Caco-2 (cell line): ENCODE measurements at regions of chr17 and their contacts with region 1.

Region 1: GRCh38 chr17:77444984-77445759 is 304.4 kb downstream of the SEC14L1 start:
- DNase-seq: no peak
- H3K4me3 ChIP-seq: no peak overlapping the region
- H3K4me3 Mint-ChIP-seq: no peak overlapping the region
- H3K27ac Mint-ChIP-seq: peak overlapping the region; percentile 16
- H3K4me1 ChIP-seq: peaks cover 21% of the 10 kb centered on the region
- H3K4me1 Mint-ChIP-seq: peaks cover 25% of the 10 kb centered on the region
- H3K27me3 ChIP-seq: no peaks in the 10 kb centered on the region
- H3K27me3 Mint-ChIP-seq: no peaks in the 10 kb centered on the region
- CTCF ChIP-seq: no peak

Region 2: GRCh38 chr17:77479372-77480198 is 34.4 kb after region 1 on chr17:
- CTCF ChIA-PET with region 1: no interaction called
- POLR2A ChIA-PET with region 1: no interaction called
- intact Hi-C with region 1: no loop called
- DNase-seq: no peak
- H3K4me3 ChIP-seq: no peak overlapping the region
- H3K4me3 Mint-ChIP-seq: no peak overlapping the region
- H3K27ac Mint-ChIP-seq: peak overlapping the region; percentile 70
- H3K4me1 ChIP-seq: peaks cover 11% of the 10 kb centered on the region
- H3K4me1 Mint-ChIP-seq: peaks cover 12% of the 10 kb centered on the region
- H3K27me3 ChIP-seq: no peaks in the 10 kb centered on the region
- H3K27me3 Mint-ChIP-seq: no peaks in the 10 kb centered on the region
- CTCF ChIP-seq: no peak

Region 3: GRCh38 chr17:78532922-78533640 is 1087.9 kb after region 1 on chr17:
- CTCF ChIA-PET with region 1: no interaction called
- POLR2A ChIA-PET with region 1: no interaction called
- intact Hi-C with region 1: loop called (anchors 5 kb)
- DNase-seq: no peak
- H3K4me3 ChIP-seq: no peak overlapping the region
- H3K4me3 Mint-ChIP-seq: no peak overlapping the region
- H3K27ac Mint-ChIP-seq: no peak overlapping the region
- H3K4me1 ChIP-seq: no peaks in the 10 kb centered on the region
- H3K4me1 Mint-ChIP-seq: peaks cover 6% of the 10 kb centered on the region
- H3K27me3 ChIP-seq: no peaks in the 10 kb centered on the region
- H3K27me3 Mint-ChIP-seq: no peaks in the 10 kb centered on the region
- CTCF ChIP-seq: no peak